ENCODE measurements at regions of chr1 and their contacts with region 1.

Region 1: GRCh38 chr1:89615676-89616598 is 17.0 kb upstream of the LRRC8C start:
- DNase-seq: peak in 3 of 14 experiments; percentile 48 to 66 (median 56)
- ATAC-seq: no peak
- H3K4me3 ChIP-seq: no peak overlapping the region
- H3K4me3 Mint-ChIP-seq: no peak overlapping the region
- H3K27ac ChIP-seq: no peak overlapping the region
- H3K27ac Mint-ChIP-seq: peak overlapping the region; percentile 99
- H3K4me1 ChIP-seq: peaks cover 42% of the 10 kb centered on the region
- H3K4me1 Mint-ChIP-seq: peaks cover 90% of the 10 kb centered on the region
- H3K27me3 ChIP-seq: no peaks in the 10 kb centered on the region
- H3K27me3 Mint-ChIP-seq: no peaks in the 10 kb centered on the region
- CTCF ChIP-seq: peak; percentile 17

Region 2: DNA sequence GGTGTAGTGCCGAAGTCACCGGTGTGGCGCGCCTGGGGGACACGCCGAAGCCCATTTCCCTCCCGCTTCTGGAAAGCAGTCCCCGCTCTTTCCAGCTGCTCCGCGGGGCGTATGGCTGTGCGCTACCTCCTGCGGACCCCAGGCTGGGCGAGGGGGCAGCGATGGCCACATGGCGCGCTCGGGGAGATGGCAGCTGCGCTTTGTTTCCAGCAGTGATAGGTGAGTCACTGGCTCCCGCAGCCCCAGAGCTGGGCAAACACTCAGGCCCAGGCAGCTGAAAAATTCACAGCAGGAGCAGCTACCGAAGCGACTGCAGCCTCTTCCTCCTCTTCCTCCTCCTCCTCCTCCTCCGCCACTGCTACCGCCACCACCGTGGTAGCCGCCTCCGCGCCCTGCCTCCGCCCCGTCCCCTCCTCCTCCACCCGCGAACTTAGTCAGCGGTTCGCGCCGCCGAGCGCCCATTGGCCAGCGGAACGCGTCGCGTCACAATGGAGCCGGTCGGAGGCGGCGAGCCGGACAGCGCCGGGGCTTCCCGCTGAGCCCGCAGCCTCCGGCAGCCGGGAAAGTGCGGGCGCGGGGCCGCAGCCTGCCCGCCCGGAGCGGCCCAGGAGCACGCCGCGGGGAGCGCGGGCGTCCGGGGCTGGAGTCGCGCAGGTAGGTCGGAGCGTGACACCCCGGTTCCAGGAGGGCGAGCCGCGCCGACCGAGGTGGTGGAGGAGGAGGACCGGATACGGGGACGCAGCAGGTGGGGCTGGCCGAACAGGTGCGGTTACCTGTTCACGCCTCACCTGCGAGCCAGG is 91.4 kb before region 1 on chr1 and contains the start of gene LRRC8B:
- CTCF ChIA-PET with region 1: interaction called, 3 read pairs
- POLR2A ChIA-PET with region 1: interaction called, 93 read pairs
- intact Hi-C with region 1: loop called in 1 of 2 experiments (anchors 1 kb)
- DNase-seq: peak; percentile 74 to 95 (median 86)
- ATAC-seq: peak; percentile 79
- H3K4me3 ChIP-seq: peak within 1 kb of the TSS; percentile 97
- H3K4me3 Mint-ChIP-seq: no peak within 1 kb of the TSS
- H3K27ac ChIP-seq: peak within 1 kb of the TSS; percentile 90 to 91
- H3K27ac Mint-ChIP-seq: no peak within 1 kb of the TSS
- H3K4me1 ChIP-seq: peaks cover 23% of the 10 kb centered on the region
- H3K4me1 Mint-ChIP-seq: peaks cover 18% of the 10 kb centered on the region
- H3K27me3 ChIP-seq: no peaks in the 10 kb centered on the region
- H3K27me3 Mint-ChIP-seq: no peaks in the 10 kb centered on the region
- CTCF ChIP-seq: no peak
- total RNA-seq, gene LRRC8B: 15.4 to 16.8 TPM

Region 3: GRCh38 chr1:89598450-89599331 is 17.2 kb before region 1 on chr1:
- CTCF ChIA-PET with region 1: interaction called, 34 read pairs
- POLR2A ChIA-PET with region 1: interaction called, 217 read pairs
- intact Hi-C with region 1: no loop called
- DNase-seq: peak in 3 of 14 experiments; percentile 51 to 68 (median 67)
- ATAC-seq: peak; percentile 70
- H3K4me3 ChIP-seq: no peak overlapping the region
- H3K4me3 Mint-ChIP-seq: peak overlapping the region; percentile 7
- H3K27ac ChIP-seq: no peak overlapping the region
- H3K27ac Mint-ChIP-seq: peak overlapping the region; percentile 21
- H3K4me1 ChIP-seq: peaks cover 27% of the 10 kb centered on the region
- H3K4me1 Mint-ChIP-seq: peaks cover 90% of the 10 kb centered on the region
- H3K27me3 ChIP-seq: no peaks in the 10 kb centered on the region
- H3K27me3 Mint-ChIP-seq: no peaks in the 10 kb centered on the region
- CTCF ChIP-seq: peak; percentile 75

Region 4: DNA sequence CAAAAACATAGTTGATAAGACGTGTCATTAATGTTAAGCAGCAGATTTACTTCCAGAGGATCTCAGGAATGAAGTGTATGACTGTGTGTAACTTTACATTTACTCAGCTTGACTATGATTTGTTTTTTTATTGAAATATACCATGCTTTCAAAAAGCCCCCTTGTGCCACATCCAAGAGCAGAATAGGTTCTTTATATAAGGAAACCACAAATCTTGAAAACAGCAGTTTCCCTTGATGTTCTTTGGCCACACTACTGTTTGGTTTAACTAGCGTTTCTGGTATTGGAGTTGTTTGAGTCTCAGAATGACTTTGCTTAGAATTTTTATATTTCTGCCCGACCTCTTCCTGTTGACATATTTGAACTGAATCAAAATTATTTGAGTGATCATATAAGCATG is 41.9 kb after region 1 on chr1:
- CTCF ChIA-PET with region 1: no interaction called
- POLR2A ChIA-PET with region 1: interaction called, 65 read pairs
- intact Hi-C with region 1: loop called in 1 of 2 experiments (anchors 2 kb)
- DNase-seq: peak in 4 of 14 experiments; percentile 16 to 86 (median 84)
- ATAC-seq: peak; percentile 76
- H3K4me3 ChIP-seq: peak overlapping the region; percentile 11
- H3K4me3 Mint-ChIP-seq: peak overlapping the region; percentile 70
- H3K27ac ChIP-seq: peak overlapping the region; percentile 62 to 63
- H3K27ac Mint-ChIP-seq: peak overlapping the region; percentile 88
- H3K4me1 ChIP-seq: peaks cover 48% of the 10 kb centered on the region
- H3K4me1 Mint-ChIP-seq: peaks cover 96% of the 10 kb centered on the region
- H3K27me3 ChIP-seq: no peaks in the 10 kb centered on the region
- H3K27me3 Mint-ChIP-seq: no peaks in the 10 kb centered on the region
- CTCF ChIP-seq: no peak

Region 5: DNA sequence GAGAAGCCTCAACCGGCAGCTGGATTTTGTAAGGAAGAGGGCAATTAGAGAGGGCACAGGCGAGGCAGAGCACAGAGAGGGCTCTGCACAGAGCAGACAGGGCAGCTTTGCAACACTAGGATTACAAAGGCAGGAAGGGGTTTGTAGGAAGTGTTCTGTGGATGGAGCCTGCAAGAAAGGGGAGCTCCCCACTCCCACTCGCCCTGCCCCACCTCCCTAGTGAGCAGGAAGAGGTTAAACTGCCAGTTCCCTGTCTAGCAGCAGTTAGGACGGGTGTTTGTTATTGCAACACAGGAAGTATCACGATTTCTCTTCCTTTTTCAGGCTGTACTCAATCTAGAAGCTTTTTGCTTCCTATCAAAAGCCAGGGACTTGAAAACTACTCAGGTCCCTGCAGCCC is 141.6 kb after region 1 on chr1:
- CTCF ChIA-PET with region 1: interaction called, 23 read pairs
- POLR2A ChIA-PET with region 1: interaction called, 88 read pairs
- intact Hi-C with region 1: no loop called
- DNase-seq: peak in 11 of 14 experiments; percentile 15 to 76 (median 38)
- ATAC-seq: peak; percentile 74
- H3K4me3 ChIP-seq: peak overlapping the region; percentile 41
- H3K4me3 Mint-ChIP-seq: peak overlapping the region; percentile 82
- H3K27ac ChIP-seq: peak overlapping the region; percentile 64 to 77
- H3K27ac Mint-ChIP-seq: peak overlapping the region; percentile 86
- H3K4me1 ChIP-seq: peaks cover 71% of the 10 kb centered on the region
- H3K4me1 Mint-ChIP-seq: peaks cover 89% of the 10 kb centered on the region
- H3K27me3 ChIP-seq: no peaks in the 10 kb centered on the region
- H3K27me3 Mint-ChIP-seq: no peaks in the 10 kb centered on the region
- CTCF ChIP-seq: no peak

Measured in CD4-positive, alpha-beta T cell (primary cell).